WTC11 (cell line): ENCODE measurements at regions of chr17 and their contacts with region 1.

Region 1: DNA sequence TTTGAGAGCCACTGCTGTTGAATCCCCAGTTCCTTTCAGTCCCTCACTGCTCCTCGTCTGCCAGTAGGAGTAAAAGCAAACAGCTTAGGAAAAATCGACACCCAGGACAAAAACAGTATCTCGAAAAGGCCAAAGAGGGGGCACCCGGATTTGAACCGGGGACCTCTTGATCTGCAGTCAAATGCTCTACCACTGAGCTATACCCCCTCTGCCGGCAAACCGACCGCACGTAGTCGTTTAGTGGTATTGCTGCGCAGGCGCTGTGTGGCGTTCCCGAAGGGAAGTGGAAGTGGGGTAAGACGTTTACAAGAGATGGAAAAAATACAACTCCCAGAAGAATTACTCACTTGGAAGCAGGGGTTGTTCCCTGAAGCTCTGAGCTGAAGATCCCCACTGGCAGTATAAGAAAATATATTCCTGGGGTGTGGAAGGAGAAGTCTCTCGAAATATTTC is 2.2 kb upstream of the PLXDC1 start:
- DNase-seq: peak; percentile 92
- ATAC-seq: peak; percentile 22
- H3K4me3 Mint-ChIP-seq: peak overlapping the region; percentile 100
- H3K27ac Mint-ChIP-seq: peak overlapping the region; percentile 13
- H3K4me1 Mint-ChIP-seq: peaks cover 21% of the 10 kb centered on the region
- H3K27me3 Mint-ChIP-seq: peaks cover 43% of the 10 kb centered on the region
- CTCF ChIP-seq: no peak

Region 2: DNA sequence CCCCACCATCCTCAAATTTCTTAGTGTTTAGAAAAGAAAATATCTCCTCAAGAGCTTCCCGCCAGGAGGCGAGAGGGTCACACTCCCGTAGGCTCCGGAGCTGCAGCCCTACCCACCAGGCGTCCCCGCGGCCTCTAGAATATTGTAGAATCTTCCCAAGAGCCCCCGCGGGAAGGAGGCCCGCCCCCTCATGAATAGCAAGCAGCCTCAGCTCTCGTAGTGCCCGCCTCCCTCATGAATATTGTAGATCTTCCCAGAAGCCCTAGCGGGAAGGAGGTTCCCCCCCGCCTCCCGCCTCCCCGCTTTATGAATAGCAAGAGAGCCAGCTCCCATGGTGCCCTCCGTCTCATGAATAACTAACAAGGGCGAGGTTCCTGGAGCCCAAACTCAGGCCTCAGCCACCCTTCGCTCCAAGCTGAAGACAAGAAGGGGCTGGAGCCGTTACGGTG is 186.3 kb before region 1 on chr17 and contains the start of gene FBXO47:
- CTCF ChIA-PET with region 1: interaction called, 12 read pairs
- POLR2A ChIA-PET with region 1: no interaction called
- DNase-seq: peak; percentile 96
- ATAC-seq: peak; percentile 98
- H3K4me3 Mint-ChIP-seq: peak within 1 kb of the TSS; percentile 67
- H3K27ac Mint-ChIP-seq: peak within 1 kb of the TSS; percentile 89
- H3K4me1 Mint-ChIP-seq: peaks cover 14% of the 10 kb centered on the region
- H3K27me3 Mint-ChIP-seq: no peaks in the 10 kb centered on the region; the same call in 1 of the 2 replicates
- CTCF ChIP-seq: no peak
- total RNA-seq, gene FBXO47: not detected in 3 replicates

Region 3: GRCh38 chr17:39026980-39027451 is 126.6 kb before region 1 on chr17:
- CTCF ChIA-PET with region 1: interaction called, 10 read pairs
- POLR2A ChIA-PET with region 1: no interaction called
- DNase-seq: peak; percentile 72
- ATAC-seq: peak; percentile 95
- H3K4me3 Mint-ChIP-seq: peak overlapping the region; percentile 68
- H3K27ac Mint-ChIP-seq: no peak overlapping the region
- H3K4me1 Mint-ChIP-seq: peaks cover 9% of the 10 kb centered on the region
- H3K27me3 Mint-ChIP-seq: peaks cover 38% of the 10 kb centered on the region
- CTCF ChIP-seq: no peak

Region 4: GRCh38 chr17:39064374-39064773 is 89.3 kb before region 1 on chr17:
- CTCF ChIA-PET with region 1: interaction called, 10 read pairs
- POLR2A ChIA-PET with region 1: no interaction called
- DNase-seq: no peak
- ATAC-seq: no peak
- H3K4me3 Mint-ChIP-seq: no peak overlapping the region
- H3K27ac Mint-ChIP-seq: no peak overlapping the region
- H3K4me1 Mint-ChIP-seq: peaks cover 18% of the 10 kb centered on the region
- H3K27me3 Mint-ChIP-seq: no peaks in the 10 kb centered on the region
- CTCF ChIP-seq: no peak

Region 5: DNA sequence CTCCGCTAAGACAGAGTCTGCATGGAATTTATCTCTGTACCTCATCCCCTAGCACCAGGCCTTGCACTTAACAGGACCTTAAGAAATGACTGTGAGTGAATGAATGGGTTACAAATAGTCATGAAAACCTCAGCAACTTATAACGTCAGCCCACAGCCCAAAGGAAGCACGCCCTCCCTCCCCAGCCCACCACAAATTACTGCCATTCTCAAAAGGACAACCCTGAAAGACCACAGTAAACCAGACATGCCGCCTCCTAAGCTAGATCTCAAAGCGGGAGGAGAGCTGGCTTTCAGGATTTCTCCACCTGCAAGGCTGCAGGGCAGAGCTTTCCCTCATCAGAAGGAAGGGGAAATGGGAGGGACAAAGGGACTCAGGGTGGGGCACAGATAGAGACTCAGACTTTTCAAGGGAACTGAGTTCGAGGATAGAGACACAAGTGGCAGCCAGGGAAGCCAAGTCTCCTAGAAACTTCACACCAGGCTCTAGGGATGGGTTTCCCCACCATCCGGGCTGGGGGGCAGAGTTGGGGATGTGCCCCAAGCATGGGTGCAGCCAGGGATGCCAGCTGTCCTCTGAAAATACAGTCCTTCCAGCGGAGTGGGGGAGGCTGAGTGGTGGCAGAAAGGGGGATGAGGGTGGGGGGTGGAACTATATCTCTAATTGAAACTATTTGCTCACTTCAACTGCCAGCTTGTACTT is 58.9 kb before region 1 on chr17:
- CTCF ChIA-PET with region 1: interaction called, 10 read pairs
- POLR2A ChIA-PET with region 1: no interaction called
- DNase-seq: no peak
- ATAC-seq: no peak
- H3K4me3 Mint-ChIP-seq: no peak overlapping the region
- H3K27ac Mint-ChIP-seq: 0 out of 2 replicates have a peak overlapping the region, but pooled peaks have one; percentile 25
- H3K4me1 Mint-ChIP-seq: peaks cover 30% of the 10 kb centered on the region
- H3K27me3 Mint-ChIP-seq: no peaks in the 10 kb centered on the region
- CTCF ChIP-seq: no peak